Naive thymus-derived CD4-positive, alpha-beta T cell (primary cell): ENCODE measurements at regions of chr6 and their contacts with region 1.

Region 1: GRCh38 chr6:47242483-47243386 is 67.0 kb downstream of the TNFRSF21 start:
- DNase-seq: peak; percentile 30 to 82 (median 71)
- ATAC-seq: peak; percentile 96
- H3K4me3 ChIP-seq: no peak overlapping the region
- H3K4me3 Mint-ChIP-seq: peak overlapping the region in 9 of 10 donors; percentile 15 to 65 (median 31)
- H3K27ac ChIP-seq: no peak overlapping the region
- H3K27ac Mint-ChIP-seq: peak overlapping the region in 7 of 9 donors; percentile 25 to 81 (median 52)
- H3K4me1 ChIP-seq: peaks cover 0 to 20% of the 10 kb centered on the region in 2 donors
- H3K4me1 Mint-ChIP-seq: peaks cover 14 to 67% (median 51%) of the 10 kb centered on the region in 7 donors
- H3K27me3 ChIP-seq: no peaks in the 10 kb centered on the region
- H3K27me3 Mint-ChIP-seq: no peaks in the 10 kb centered on the region

Region 2: GRCh38 chr6:46410334-46410953 is 832.3 kb before region 1 on chr6:
- CTCF ChIA-PET with region 1: no interaction called
- POLR2A ChIA-PET with region 1: no interaction called
- intact Hi-C with region 1: no loop called
- DNase-seq: peak in 6 of 9 donors; percentile 20 to 61 (median 40)
- ATAC-seq: no peak
- H3K4me3 ChIP-seq: no peak overlapping the region
- H3K4me3 Mint-ChIP-seq: no peak overlapping the region
- H3K27ac ChIP-seq: no peak overlapping the region
- H3K27ac Mint-ChIP-seq: no peak overlapping the region
- H3K4me1 ChIP-seq: no peaks in the 10 kb centered on the region
- H3K4me1 Mint-ChIP-seq: no peaks in the 10 kb centered on the region
- H3K27me3 ChIP-seq: no peaks in the 10 kb centered on the region
- H3K27me3 Mint-ChIP-seq: peaks cover 0 to 4% (median 4%) of the 10 kb centered on the region in 5 donors

Region 3: GRCh38 chr6:47203266-47203937 is 39.3 kb before region 1 on chr6:
- CTCF ChIA-PET with region 1: no interaction called
- POLR2A ChIA-PET with region 1: no interaction called
- intact Hi-C with region 1: loop called in 1 of 2 experiments (anchors 2 kb)
- DNase-seq: peak in 7 of 9 donors; percentile 10 to 51 (median 26)
- ATAC-seq: peak; percentile 78
- H3K4me3 ChIP-seq: no peak overlapping the region
- H3K4me3 Mint-ChIP-seq: peak overlapping the region in 5 of 10 donors; percentile 6 to 37 (median 23)
- H3K27ac ChIP-seq: no peak overlapping the region
- H3K27ac Mint-ChIP-seq: peak overlapping the region in 7 of 9 donors; percentile 58 to 93 (median 71)
- H3K4me1 ChIP-seq: peaks cover 0 to 10% of the 10 kb centered on the region in 2 donors
- H3K4me1 Mint-ChIP-seq: peaks cover 6 to 21% (median 13%) of the 10 kb centered on the region in 7 donors
- H3K27me3 ChIP-seq: no peaks in the 10 kb centered on the region
- H3K27me3 Mint-ChIP-seq: peaks cover 0 to 11% (median 0%) of the 10 kb centered on the region in 5 donors